Tibial artery (tissue), 4 donors: ENCODE measurements at regions of chr9 and their contacts with region 1.

Region 1: GRCh38 chr9:111909441-111909840 is 12.8 kb downstream of the UGCG start:
- DNase-seq: no peak
- H3K4me3 ChIP-seq: no peak overlapping the region
- H3K27ac ChIP-seq: no peak overlapping the region
- H3K4me1 ChIP-seq: peaks cover 0 to 27% (median 13%) of the 10 kb centered on the region in 4 donors
- H3K27me3 ChIP-seq: no peaks in the 10 kb centered on the region
- CTCF ChIP-seq: no peak

Region 2: GRCh38 chr9:111516061-111516465 is 393.4 kb before region 1 on chr9:
- intact Hi-C with region 1: no loop called
- DNase-seq: no peak
- H3K4me3 ChIP-seq: no peak overlapping the region
- H3K27ac ChIP-seq: no peak overlapping the region
- H3K4me1 ChIP-seq: no peaks in the 10 kb centered on the region
- H3K27me3 ChIP-seq: no peaks in the 10 kb centered on the region
- CTCF ChIP-seq: no peak

Region 3: GRCh38 chr9:111965566-111966019 is 56.2 kb after region 1 on chr9:
- intact Hi-C with region 1: loop called (anchors 10 kb)
- DNase-seq: no peak
- H3K4me3 ChIP-seq: no peak overlapping the region
- H3K27ac ChIP-seq: no peak overlapping the region
- H3K4me1 ChIP-seq: no peaks in the 10 kb centered on the region
- H3K27me3 ChIP-seq: no peaks in the 10 kb centered on the region
- CTCF ChIP-seq: no peak

Region 4: GRCh38 chr9:112015149-112015548 is 105.7 kb after region 1 on chr9:
- intact Hi-C with region 1: loop called (anchors 5 kb)
- DNase-seq: no peak
- H3K4me3 ChIP-seq: no peak overlapping the region
- H3K27ac ChIP-seq: no peak overlapping the region
- H3K4me1 ChIP-seq: peaks cover 0 to 29% (median 20%) of the 10 kb centered on the region in 4 donors
- H3K27me3 ChIP-seq: no peaks in the 10 kb centered on the region
- CTCF ChIP-seq: no peak